Heart left ventricle (tissue), 16 donors: ENCODE measurements at regions of chr12 and their contacts with region 1.

Region 1: GRCh38 chr12:27024291-27024690 is 1.9 kb downstream of the MED21 start:
- DNase-seq: no peak
- ATAC-seq: no peak
- H3K4me3 ChIP-seq: peak overlapping the region in 2 of 12 donors; percentile 80 to 90
- H3K27ac ChIP-seq: no peak overlapping the region
- H3K4me1 ChIP-seq: peaks cover 0 to 32% (median 20%) of the 10 kb centered on the region in 12 donors
- H3K27me3 ChIP-seq: no peaks in the 10 kb centered on the region
- CTCF ChIP-seq: no peak
- POLR2A ChIP-seq: no peak

Region 2: DNA sequence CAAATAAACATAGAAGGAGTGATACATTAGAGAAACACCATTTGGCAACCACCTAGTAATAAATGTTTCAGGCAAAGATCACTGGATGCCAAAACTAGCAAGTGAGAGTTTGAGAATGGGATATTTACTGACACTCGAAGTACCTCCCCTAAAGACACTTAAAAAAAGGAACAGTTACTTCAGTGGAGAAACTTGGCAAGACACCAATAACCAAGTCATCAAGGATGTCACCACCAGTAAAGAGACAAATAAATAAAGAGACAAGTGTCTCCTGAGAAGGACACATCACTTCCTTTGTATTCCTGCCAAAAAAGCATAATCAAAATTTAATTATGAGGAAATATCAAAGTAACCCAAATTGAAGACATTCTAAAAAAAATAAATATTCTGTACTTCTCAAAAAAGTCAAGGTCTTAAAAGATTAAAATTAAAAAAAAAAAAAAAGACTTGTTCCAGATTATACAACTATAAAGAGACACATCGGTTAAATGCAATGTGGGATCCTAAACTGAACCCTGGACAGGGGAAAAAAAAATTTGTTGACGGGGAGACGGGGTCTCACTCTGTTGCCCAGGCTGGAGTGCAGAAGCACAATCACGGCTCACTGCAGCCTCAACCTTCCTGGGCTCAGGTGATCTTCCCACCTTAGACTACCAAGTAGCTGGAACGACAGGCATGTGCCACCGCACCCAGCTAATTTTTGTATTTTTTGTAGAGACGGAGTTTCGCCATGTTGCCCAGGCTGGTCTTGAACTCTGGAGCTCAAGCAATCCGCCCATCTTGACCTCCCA is 36.5 kb before region 1 on chr12:
- intact Hi-C with region 1: no loop called
- DNase-seq: no peak
- ATAC-seq: peak; percentile 41 to 65 (median 54)
- H3K4me3 ChIP-seq: no peak overlapping the region
- H3K27ac ChIP-seq: peak overlapping the region in 1 of 12 donors; percentile 42
- H3K4me1 ChIP-seq: peaks cover 0 to 25% (median 4%) of the 10 kb centered on the region in 12 donors
- H3K27me3 ChIP-seq: no peaks in the 10 kb centered on the region
- CTCF ChIP-seq: no peak
- POLR2A ChIP-seq: no peak

Region 3: DNA sequence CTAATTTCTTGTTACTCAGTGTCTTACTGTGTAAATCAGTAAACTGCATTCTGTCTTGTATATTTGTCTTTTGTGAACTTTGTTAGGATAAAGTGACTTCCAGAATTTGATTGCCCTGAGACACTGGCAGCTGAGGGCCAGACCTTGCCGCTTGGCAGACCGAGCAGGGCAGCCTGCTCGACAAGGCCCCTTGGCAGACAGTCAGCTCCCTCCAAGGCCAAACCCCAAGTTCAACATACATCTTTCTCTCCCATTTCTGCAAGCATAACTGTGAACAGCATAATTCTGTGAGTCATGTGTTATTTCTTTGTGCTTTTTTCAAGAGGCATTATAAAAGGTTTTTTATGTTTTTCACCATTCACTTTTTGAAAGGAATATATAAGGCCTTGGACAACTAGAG is 269.2 kb after region 1 on chr12:
- intact Hi-C with region 1: loop called in 1 of 10 experiments (anchors 5 kb)
- DNase-seq: peak in 2 of 5 donors; percentile 53
- ATAC-seq: peak in 1 of 4 donors; percentile 73
- H3K4me3 ChIP-seq: no peak overlapping the region
- H3K27ac ChIP-seq: peak overlapping the region in 9 of 12 donors; percentile 55 to 76 (median 70)
- H3K4me1 ChIP-seq: peaks cover 2 to 97% (median 63%) of the 10 kb centered on the region in 12 donors
- H3K27me3 ChIP-seq: no peaks in the 10 kb centered on the region
- CTCF ChIP-seq: no peak
- POLR2A ChIP-seq: no peak

Region 4: GRCh38 chr12:27673101-27673718 is 648.9 kb after region 1 on chr12:
- intact Hi-C with region 1: loop called in 1 of 10 experiments (anchors 10 kb)
- DNase-seq: no peak
- ATAC-seq: peak; percentile 83 to 94 (median 88)
- H3K4me3 ChIP-seq: peak overlapping the region in 1 of 12 donors; percentile 14
- H3K27ac ChIP-seq: peak overlapping the region; percentile 22 to 76 (median 58)
- H3K4me1 ChIP-seq: peaks cover 0 to 38% (median 25%) of the 10 kb centered on the region in 12 donors
- H3K27me3 ChIP-seq: no peaks in the 10 kb centered on the region
- CTCF ChIP-seq: no peak
- POLR2A ChIP-seq: no peak